PC-3 (cell line): ENCODE measurements at regions of chr6 and their contacts with region 1.

Region 1: GRCh38 chr6:83430611-83431563 is at the start of gene ME1:
- DNase-seq: peak; percentile 88
- ATAC-seq: peak; percentile 71
- H3K4me3 ChIP-seq: peak within 1 kb of the TSS; percentile 92
- H3K27ac ChIP-seq: peak within 1 kb of the TSS; percentile 89
- H3K4me1 ChIP-seq: peaks cover 58% of the 10 kb centered on the region
- H3K27me3 ChIP-seq: no peaks in the 10 kb centered on the region
- CTCF ChIP-seq: no peak
- total RNA-seq, gene ME1: 22.3 and 28.0 TPM in 2 replicates

Region 2: DNA sequence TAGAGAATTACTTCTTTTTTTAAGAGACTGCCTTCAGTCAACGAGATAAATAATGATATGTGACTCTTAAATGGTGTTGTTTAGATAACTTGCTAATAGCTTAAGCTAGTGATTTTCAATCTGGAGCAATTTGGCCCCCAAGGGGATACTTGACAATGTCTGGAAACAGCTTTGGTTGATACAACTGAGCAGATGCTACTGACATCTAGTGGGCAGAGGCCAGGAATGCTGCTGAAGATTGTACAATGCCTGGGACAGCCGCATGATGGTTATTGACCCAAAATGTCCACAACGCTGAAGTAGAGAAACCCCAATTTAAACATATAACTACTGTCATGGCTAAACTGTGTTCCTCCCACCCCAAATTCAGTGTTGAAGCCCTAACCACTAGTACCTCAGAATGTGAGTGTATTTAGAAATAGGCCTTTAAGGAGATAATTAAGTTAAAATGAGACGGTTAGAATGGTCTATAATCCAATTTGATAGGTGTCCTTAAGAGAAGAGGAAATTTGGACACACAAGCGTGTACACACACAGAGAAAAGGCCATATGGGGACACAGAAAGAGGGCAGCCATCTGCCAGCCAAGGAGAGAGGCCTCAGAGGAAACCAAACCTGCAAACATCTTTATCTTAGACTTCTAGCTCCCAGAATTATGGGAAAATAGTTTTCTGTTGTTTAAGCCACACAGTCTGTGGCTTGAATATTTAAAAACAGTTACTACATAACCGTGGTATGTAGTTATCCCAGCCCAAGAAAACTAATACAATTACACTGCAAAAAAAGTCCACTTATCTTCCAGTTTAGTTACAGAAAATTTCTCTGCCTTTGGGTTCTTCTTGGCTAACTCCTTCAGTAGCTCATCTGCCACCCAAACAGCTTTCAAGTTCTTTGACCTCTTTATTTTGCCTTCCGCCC is 215.5 kb before region 1 on chr6:
- CTCF ChIA-PET with region 1: no interaction called
- POLR2A ChIA-PET with region 1: no interaction called
- intact Hi-C with region 1: no loop called
- DNase-seq: peak; percentile 53
- ATAC-seq: peak; percentile 72; the same call in 1 of the 2 replicates
- H3K4me3 ChIP-seq: no peak overlapping the region
- H3K27ac ChIP-seq: no peak overlapping the region
- H3K4me1 ChIP-seq: no peaks in the 10 kb centered on the region
- H3K27me3 ChIP-seq: no peaks in the 10 kb centered on the region
- CTCF ChIP-seq: peak; percentile 77

Region 3: GRCh38 chr6:83365931-83366330 is 65.0 kb before region 1 on chr6:
- CTCF ChIA-PET with region 1: no interaction called
- POLR2A ChIA-PET with region 1: no interaction called
- intact Hi-C with region 1: no loop called
- DNase-seq: no peak
- ATAC-seq: no peak
- H3K4me3 ChIP-seq: no peak overlapping the region
- H3K27ac ChIP-seq: no peak overlapping the region
- H3K4me1 ChIP-seq: no peaks in the 10 kb centered on the region
- H3K27me3 ChIP-seq: no peaks in the 10 kb centered on the region
- CTCF ChIP-seq: no peak

Region 4: GRCh38 chr6:83463886-83464285 is 33.0 kb after region 1 on chr6:
- CTCF ChIA-PET with region 1: no interaction called
- POLR2A ChIA-PET with region 1: no interaction called
- intact Hi-C with region 1: loop called (anchors 1 kb)
- DNase-seq: peak; percentile 81
- ATAC-seq: peak; percentile 46
- H3K4me3 ChIP-seq: peak overlapping the region; percentile 33; the same call in 1 of the 2 replicates
- H3K27ac ChIP-seq: peak overlapping the region; percentile 93
- H3K4me1 ChIP-seq: peaks cover 51% of the 10 kb centered on the region
- H3K27me3 ChIP-seq: no peaks in the 10 kb centered on the region
- CTCF ChIP-seq: no peak

Region 5: GRCh38 chr6:84197708-84198107 is 766.8 kb after region 1 on chr6:
- CTCF ChIA-PET with region 1: no interaction called
- POLR2A ChIA-PET with region 1: no interaction called
- intact Hi-C with region 1: no loop called
- DNase-seq: no peak
- ATAC-seq: no peak
- H3K4me3 ChIP-seq: no peak overlapping the region
- H3K27ac ChIP-seq: no peak overlapping the region
- H3K4me1 ChIP-seq: peaks cover 17% of the 10 kb centered on the region
- H3K27me3 ChIP-seq: no peaks in the 10 kb centered on the region
- CTCF ChIP-seq: no peak